Activated B cell treated with CpG ODN at 0.5 μM for 24 hours (primary cell): ENCODE measurements at regions of chr10 and their contacts with region 1.

Region 1: DNA sequence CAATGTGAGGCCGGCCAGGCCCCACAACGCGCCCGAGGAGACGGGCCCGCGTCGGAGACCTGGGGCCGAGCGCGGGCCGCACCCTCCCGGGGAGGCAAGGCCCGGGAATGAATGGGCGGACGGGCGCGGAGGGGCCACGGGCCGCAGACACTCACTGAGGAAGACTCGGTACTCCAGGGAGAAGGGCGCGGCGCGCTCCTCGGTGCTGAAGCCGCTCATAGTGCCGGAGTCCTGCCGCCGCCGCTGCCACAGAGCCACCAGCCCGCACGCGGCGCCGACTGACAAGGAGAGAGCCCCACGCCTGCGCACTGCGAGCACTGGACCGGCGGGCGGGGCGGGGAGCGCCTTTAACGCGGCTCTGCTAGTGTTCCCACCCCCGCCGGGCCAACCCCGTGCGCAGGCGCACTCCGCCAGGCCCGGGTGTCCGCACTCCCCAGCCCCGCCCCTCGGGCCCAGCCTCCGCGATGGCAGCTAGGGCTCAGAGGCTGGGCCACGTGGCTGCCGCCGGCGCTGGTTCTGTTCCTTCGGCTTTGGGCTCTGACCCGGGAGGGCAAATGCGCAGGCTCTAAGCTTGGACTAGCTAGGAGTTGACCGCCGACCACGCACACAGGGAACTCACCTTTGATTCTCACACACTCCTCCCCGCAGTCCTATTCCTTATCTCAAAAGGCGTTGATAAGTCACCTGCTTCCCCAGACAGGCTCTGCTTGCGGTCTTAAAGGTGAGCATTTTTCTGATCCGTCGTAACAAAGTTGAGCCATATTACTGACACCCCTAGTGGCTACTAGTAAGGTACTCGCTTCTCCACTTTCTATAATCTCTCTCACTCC is at the start of gene PPA1:
- DNase-seq: peak; percentile 100
- ATAC-seq: peak; percentile 96
- H3K4me3 Mint-ChIP-seq: peak within 1 kb of the TSS; percentile 92
- H3K27ac Mint-ChIP-seq: peak within 1 kb of the TSS; percentile 92
- H3K4me1 Mint-ChIP-seq: peaks cover 17% of the 10 kb centered on the region
- H3K27me3 Mint-ChIP-seq: no peaks in the 10 kb centered on the region
- CTCF ChIP-seq: no peak
- total RNA-seq, gene PPA1: 107 and 118 TPM in 2 replicates

Region 2: DNA sequence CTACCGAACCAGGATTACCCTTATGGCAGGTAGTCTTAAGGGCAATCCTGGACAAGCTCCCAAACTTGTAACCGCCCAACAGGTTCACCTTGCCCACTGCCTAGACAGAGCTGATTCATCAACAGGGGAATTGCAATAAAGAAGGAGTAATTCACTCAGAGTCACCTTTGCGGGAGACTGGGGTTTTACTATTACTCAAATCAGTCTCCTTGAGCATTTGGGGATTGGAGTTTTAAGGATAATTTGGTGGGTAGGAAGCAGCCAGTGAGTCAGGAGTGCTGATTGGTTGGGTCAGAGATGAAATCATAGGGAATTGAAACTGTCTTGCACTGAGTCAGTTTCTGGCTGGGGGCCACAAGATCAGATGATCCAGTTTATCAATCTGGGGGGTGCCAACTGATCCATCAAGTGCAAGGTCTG is 929.7 kb before region 1 on chr10:
- CTCF ChIA-PET with region 1: no interaction called
- POLR2A ChIA-PET with region 1: no interaction called
- intact Hi-C with region 1: no loop called
- DNase-seq: no peak
- ATAC-seq: no peak
- H3K4me3 Mint-ChIP-seq: no peak overlapping the region
- H3K27ac Mint-ChIP-seq: no peak overlapping the region
- H3K4me1 Mint-ChIP-seq: no peaks in the 10 kb centered on the region
- H3K27me3 Mint-ChIP-seq: peaks cover 4% of the 10 kb centered on the region
- CTCF ChIP-seq: no peak

Region 3: GRCh38 chr10:69375307-69376151 is 857.8 kb before region 1 on chr10:
- CTCF ChIA-PET with region 1: no interaction called
- POLR2A ChIA-PET with region 1: no interaction called
- intact Hi-C with region 1: no loop called
- DNase-seq: no peak
- ATAC-seq: no peak
- H3K4me3 Mint-ChIP-seq: no peak overlapping the region
- H3K27ac Mint-ChIP-seq: no peak overlapping the region
- H3K4me1 Mint-ChIP-seq: peaks cover 11% of the 10 kb centered on the region
- H3K27me3 Mint-ChIP-seq: no peaks in the 10 kb centered on the region
- CTCF ChIP-seq: no peak

Region 4: GRCh38 chr10:70169649-70170364 is 63.5 kb before region 1 on chr10:
- CTCF ChIA-PET with region 1: interaction called, 3 read pairs
- POLR2A ChIA-PET with region 1: interaction called, 17 read pairs
- intact Hi-C with region 1: loop called (anchors 1 kb)
- DNase-seq: no peak
- ATAC-seq: peak; percentile 29
- H3K4me3 Mint-ChIP-seq: peak overlapping the region; percentile 94
- H3K27ac Mint-ChIP-seq: peak overlapping the region; percentile 93
- H3K4me1 Mint-ChIP-seq: peaks cover 43% of the 10 kb centered on the region
- H3K27me3 Mint-ChIP-seq: no peaks in the 10 kb centered on the region
- CTCF ChIP-seq: no peak

Region 5: DNA sequence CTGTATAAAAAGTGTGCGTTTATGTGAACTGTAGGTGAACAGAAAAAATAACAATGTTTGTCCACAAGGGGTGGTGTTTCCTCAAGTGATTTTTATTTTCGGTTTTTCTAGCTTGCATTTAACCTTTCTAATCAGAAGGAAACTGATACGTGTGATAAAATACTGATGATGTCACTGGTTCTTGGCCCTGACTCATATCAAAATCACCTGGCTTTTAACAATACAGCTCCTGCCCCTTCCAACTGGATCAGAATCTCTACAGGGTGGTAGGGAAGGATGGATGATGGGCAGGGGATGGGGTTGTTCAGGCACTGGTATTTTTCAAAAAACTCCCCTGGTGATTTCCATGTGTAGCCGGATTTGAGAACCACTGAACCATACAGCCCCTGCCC is 39.6 kb after region 1 on chr10:
- CTCF ChIA-PET with region 1: no interaction called
- POLR2A ChIA-PET with region 1: interaction called, 6 read pairs
- intact Hi-C with region 1: loop called (anchors 1 kb)
- DNase-seq: no peak
- ATAC-seq: peak; percentile 86
- H3K4me3 Mint-ChIP-seq: peak overlapping the region; percentile 57
- H3K27ac Mint-ChIP-seq: peak overlapping the region; percentile 83
- H3K4me1 Mint-ChIP-seq: peaks cover 33% of the 10 kb centered on the region
- H3K27me3 Mint-ChIP-seq: no peaks in the 10 kb centered on the region
- CTCF ChIP-seq: no peak

Region 6: DNA sequence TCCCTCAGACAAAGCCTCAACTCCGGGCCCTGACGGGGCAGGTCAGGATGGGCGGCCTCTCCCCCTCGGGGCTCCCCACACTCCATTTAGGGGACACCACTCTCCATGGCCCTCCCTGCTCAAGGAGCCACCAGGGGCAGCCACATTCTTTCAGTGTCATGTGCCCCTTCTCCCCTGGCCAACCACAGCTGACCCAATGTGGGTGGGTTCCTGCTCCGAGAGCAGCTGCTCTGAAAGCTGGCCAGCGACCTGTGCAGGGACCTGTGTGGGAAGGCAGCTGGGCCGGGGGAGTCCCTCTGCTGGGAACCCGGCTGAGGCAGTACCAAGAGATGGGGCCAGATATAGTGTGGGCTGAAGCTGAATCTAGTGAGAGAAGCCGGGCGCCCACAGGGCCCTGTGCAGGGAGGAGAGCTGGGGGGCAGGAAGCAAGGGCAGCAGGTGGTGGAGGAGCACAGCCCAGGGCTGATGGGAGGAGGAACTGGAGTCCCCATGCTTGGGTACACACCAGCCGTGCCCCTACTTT is 91.1 kb after region 1 on chr10:
- CTCF ChIA-PET with region 1: no interaction called
- POLR2A ChIA-PET with region 1: no interaction called
- intact Hi-C with region 1: no loop called
- DNase-seq: no peak
- ATAC-seq: peak; percentile 77
- H3K4me3 Mint-ChIP-seq: no peak overlapping the region
- H3K27ac Mint-ChIP-seq: no peak overlapping the region
- H3K4me1 Mint-ChIP-seq: peaks cover 27% of the 10 kb centered on the region
- H3K27me3 Mint-ChIP-seq: peaks cover 9% of the 10 kb centered on the region
- CTCF ChIP-seq: no peak

Region 7: DNA sequence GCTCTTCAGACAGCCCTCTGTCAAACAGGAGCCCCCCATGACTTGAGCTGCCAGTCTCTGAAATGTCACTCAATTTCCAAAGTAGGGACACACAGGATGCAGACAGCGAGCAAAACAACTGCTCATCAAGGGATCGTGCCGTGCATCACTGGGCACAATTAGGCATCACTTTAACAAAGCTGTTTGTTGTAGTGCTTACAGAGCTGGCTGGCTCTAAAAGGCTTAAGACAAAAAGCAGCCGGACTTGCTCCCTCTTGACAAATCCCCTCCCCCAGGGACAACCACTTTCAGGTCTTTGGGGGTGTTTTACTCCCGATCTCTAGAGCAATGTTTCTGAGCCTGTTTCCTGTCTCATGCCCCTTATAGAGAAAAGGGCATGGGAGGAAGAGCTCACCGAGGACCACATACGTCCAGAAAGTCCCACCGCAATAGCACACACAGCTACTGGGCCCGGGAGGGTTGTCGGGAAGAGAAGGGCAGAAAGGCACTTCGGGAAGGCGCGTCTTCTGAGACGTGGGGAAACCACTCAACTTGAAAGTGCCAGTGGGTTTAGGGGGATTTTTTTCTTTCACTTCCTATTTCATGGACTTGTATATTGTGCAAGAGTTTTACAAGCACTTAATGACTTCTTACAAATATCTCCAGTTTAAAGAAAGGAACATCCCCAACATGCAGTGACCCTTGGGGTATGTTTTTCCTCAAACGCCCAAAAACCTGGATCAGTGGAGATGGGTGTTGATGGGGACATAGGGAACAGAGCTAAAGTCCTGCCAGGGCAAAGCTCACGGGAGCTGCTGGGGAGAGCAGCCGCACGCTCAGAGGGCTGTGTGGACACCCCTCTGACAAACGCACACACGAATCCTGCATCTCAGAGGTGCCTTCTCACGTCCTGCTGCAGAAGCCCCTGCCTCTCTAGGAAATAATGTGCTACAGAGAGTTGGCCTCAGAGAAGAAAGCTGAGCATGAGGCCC is 122.0 kb after region 1 on chr10:
- CTCF ChIA-PET with region 1: no interaction called
- POLR2A ChIA-PET with region 1: interaction called, 16 read pairs
- intact Hi-C with region 1: loop called (anchors 1 kb)
- DNase-seq: peak; percentile 36
- ATAC-seq: peak; percentile 78
- H3K4me3 Mint-ChIP-seq: peak overlapping the region; percentile 86
- H3K27ac Mint-ChIP-seq: peak overlapping the region; percentile 94
- H3K4me1 Mint-ChIP-seq: peaks cover 40% of the 10 kb centered on the region
- H3K27me3 Mint-ChIP-seq: no peaks in the 10 kb centered on the region
- CTCF ChIP-seq: no peak

Region 8: GRCh38 chr10:70404036-70404786 is 170.9 kb after region 1 on chr10 and contains the start of gene EIF4EBP2:
- CTCF ChIA-PET with region 1: no interaction called
- POLR2A ChIA-PET with region 1: interaction called, 8 read pairs
- intact Hi-C with region 1: loop called (anchors 1 kb)
- DNase-seq: peak; percentile 100
- ATAC-seq: peak; percentile 98
- H3K4me3 Mint-ChIP-seq: peak within 1 kb of the TSS; percentile 92
- H3K27ac Mint-ChIP-seq: peak within 1 kb of the TSS; percentile 80
- H3K4me1 Mint-ChIP-seq: peaks cover 32% of the 10 kb centered on the region
- H3K27me3 Mint-ChIP-seq: no peaks in the 10 kb centered on the region
- CTCF ChIP-seq: no peak
- total RNA-seq, gene EIF4EBP2: 38.7 and 40.6 TPM in 2 replicates

Region 9: GRCh38 chr10:70866424-70866823 is 633.1 kb after region 1 on chr10:
- CTCF ChIA-PET with region 1: no interaction called
- POLR2A ChIA-PET with region 1: no interaction called
- intact Hi-C with region 1: no loop called
- DNase-seq: no peak
- ATAC-seq: no peak
- H3K4me3 Mint-ChIP-seq: no peak overlapping the region
- H3K27ac Mint-ChIP-seq: no peak overlapping the region
- H3K4me1 Mint-ChIP-seq: no peaks in the 10 kb centered on the region
- H3K27me3 Mint-ChIP-seq: no peaks in the 10 kb centered on the region
- CTCF ChIP-seq: no peak

Region 10: GRCh38 chr10:70887804-70888800 is 654.8 kb after region 1 on chr10 and contains the start of gene PCBD1:
- CTCF ChIA-PET with region 1: no interaction called
- POLR2A ChIA-PET with region 1: no interaction called
- intact Hi-C with region 1: loop called (anchors 2 kb)
- DNase-seq: peak; percentile 73
- ATAC-seq: peak; percentile 92
- H3K4me3 Mint-ChIP-seq: peak within 1 kb of the TSS; percentile 84
- H3K27ac Mint-ChIP-seq: peak within 1 kb of the TSS; percentile 76
- H3K4me1 Mint-ChIP-seq: peaks cover 8% of the 10 kb centered on the region
- H3K27me3 Mint-ChIP-seq: no peaks in the 10 kb centered on the region
- CTCF ChIP-seq: no peak
- total RNA-seq, gene PCBD1: 37.3 and 41.4 TPM in 2 replicates